ENCODE measurements at regions of chr2 and their contacts with region 1.

Region 1: GRCh38 chr2:160269803-160270570 is 69.9 kb upstream of the ITGB6 start:
- DNase-seq: peak; percentile 88 to 93
- ATAC-seq: peak; percentile 88 to 94 (median 92)
- H3K4me3 ChIP-seq: peak overlapping the region; percentile 12 to 60 (median 56)
- H3K27ac ChIP-seq: peak overlapping the region; percentile 90 to 99 (median 95)
- H3K4me1 ChIP-seq: peaks cover 4 to 43% (median 33%) of the 10 kb centered on the region in 9 donors
- H3K27me3 ChIP-seq: no peaks in the 10 kb centered on the region
- CTCF ChIP-seq: peak; percentile 60 to 85 (median 69)

Region 2: DNA sequence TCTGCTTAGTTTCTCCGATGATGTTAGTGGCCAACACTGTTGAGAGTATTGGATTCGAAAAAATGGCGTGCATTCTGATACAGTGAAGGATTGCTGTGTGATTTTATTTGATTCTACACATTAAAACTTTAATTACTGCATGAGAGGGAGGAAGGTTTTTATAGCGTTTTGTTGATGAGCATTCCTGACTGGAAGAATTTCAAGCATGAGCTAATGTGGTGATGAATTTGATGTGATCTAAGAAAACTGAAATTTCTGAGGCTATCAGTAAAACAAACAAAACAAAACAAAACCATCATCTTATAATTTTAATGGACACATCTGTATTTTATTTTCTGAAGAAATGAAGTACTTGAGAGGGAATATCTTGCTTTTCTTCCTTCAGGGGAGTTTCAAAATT is 129.5 kb before region 1 on chr2:
- intact Hi-C with region 1: loop called in 1 of 10 experiments (anchors 10 kb)
- DNase-seq: no peak
- ATAC-seq: no peak
- H3K4me3 ChIP-seq: no peak overlapping the region
- H3K27ac ChIP-seq: no peak overlapping the region
- H3K4me1 ChIP-seq: peaks cover 0 to 10% (median 0%) of the 10 kb centered on the region in 9 donors
- H3K27me3 ChIP-seq: no peaks in the 10 kb centered on the region
- CTCF ChIP-seq: no peak

Region 3: DNA sequence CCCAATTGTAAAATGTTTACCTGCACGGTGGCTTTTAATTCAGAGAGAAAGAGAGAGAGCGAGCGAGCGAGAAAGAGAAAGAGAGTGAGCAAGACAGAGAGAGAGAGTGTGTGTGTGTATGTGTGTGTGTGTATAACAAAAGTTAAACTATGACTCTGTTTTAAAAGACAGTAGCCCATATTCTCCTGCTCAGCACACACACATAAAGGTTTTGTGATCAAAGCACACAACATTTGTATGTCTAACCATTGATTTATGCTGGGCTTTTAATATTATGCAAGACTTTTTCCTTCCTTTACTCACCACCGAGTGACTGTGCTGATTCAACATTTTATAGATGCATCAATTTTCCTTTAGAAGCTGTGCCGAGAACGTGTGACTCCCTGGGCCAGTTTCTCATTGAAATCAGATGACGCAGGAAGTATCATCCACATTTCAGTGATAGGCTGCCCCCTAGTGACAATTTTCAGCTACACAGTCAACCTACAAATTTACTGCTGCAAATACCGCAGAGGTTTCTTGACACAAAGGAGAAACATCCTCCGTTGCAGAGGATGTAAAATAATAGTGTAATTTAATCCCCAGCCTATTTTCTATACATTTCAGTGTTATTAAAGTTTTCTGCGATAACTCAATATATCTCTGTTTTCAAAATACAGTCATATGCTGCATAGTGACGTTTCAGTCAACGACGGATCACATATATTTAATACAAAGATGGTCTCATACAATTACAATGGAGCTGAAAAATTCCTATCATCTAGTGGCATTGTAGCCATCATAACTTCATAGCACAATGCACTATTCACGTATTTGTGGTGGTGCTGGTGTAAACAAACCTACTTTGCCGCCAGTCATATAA is 724.4 kb after region 1 on chr2:
- intact Hi-C with region 1: loop called in 1 of 10 experiments (anchors 5 kb)
- DNase-seq: peak in 1 of 2 donors; percentile 83
- ATAC-seq: peak; percentile 81 to 94 (median 89)
- H3K4me3 ChIP-seq: peak overlapping the region in 3 of 10 donors; percentile 10 to 20 (median 18)
- H3K27ac ChIP-seq: peak overlapping the region in 9 of 10 donors; percentile 11 to 72 (median 41)
- H3K4me1 ChIP-seq: peaks cover 0 to 14% (median 5%) of the 10 kb centered on the region in 9 donors
- H3K27me3 ChIP-seq: no peaks in the 10 kb centered on the region
- CTCF ChIP-seq: peak; percentile 77 to 91 (median 87)

Measured in heart right ventricle (tissue), 16 donors.